Testis (tissue), 5 donors: ENCODE measurements at regions of chr1 and their contacts with region 1.

Region 1: DNA sequence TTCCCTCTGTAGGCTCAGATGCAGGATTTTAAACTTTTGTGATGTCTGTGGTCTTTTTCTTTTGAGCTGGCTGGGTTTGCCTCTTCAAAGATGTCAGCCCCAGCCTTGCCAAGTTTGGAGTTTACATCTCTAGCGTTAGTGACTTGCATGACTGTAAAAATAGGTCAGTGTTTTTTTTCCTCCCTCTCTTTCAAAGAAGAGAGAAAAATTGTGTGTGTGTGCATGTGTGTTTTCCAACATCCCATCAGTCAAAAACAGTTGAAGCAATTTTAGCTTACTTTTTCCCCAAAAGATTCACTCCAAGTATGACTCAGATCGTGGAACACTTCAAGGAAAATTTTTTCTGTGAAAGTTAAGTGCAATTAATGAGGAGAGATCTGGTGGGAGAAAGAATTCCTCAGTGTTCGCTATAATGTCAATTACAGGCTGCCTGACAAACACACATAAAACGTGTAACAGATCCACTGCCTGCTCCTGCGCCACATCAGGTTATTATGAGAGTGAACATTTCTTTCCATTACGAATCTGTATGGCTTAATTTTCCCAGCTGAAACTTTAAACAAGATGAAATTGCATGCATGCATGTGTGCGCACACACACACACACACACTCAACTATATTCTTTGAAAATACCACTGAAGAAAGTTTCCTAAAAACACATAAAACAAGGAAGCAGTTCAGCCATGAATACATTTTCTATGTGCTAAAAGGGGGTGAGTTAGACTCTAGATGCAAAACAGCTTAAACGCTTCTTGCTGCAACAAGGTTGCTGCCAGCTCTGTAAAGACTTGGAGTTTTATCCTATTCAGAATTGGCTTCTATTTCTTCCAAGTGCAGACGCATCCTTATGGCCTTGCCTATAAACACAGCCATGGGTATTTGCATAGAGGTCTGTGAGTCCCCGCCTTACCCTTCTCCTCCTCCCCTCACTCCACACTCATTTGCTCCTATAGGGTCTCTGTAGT is 55.5 kb downstream of the TLR5 start:
- DNase-seq: peak; percentile 43
- H3K4me3 ChIP-seq: no peak overlapping the region
- H3K27ac ChIP-seq: peak overlapping the region in 1 of 2 donors; percentile 41
- H3K4me1 ChIP-seq: peaks cover 15% of the 10 kb centered on the region
- H3K27me3 ChIP-seq: no peaks in the 10 kb centered on the region
- CTCF ChIP-seq: no peak
- POLR2A ChIP-seq: no peak

Region 2: GRCh38 chr1:222792744-222793143 is 294.8 kb before region 1 on chr1:
- intact Hi-C with region 1: loop called (anchors 5 kb)
- DNase-seq: no peak
- H3K4me3 ChIP-seq: no peak overlapping the region
- H3K27ac ChIP-seq: no peak overlapping the region
- H3K4me1 ChIP-seq: no peaks in the 10 kb centered on the region
- H3K27me3 ChIP-seq: no peaks in the 10 kb centered on the region
- CTCF ChIP-seq: peak; percentile 41 to 66 (median 59)
- POLR2A ChIP-seq: no peak

Region 3: DNA sequence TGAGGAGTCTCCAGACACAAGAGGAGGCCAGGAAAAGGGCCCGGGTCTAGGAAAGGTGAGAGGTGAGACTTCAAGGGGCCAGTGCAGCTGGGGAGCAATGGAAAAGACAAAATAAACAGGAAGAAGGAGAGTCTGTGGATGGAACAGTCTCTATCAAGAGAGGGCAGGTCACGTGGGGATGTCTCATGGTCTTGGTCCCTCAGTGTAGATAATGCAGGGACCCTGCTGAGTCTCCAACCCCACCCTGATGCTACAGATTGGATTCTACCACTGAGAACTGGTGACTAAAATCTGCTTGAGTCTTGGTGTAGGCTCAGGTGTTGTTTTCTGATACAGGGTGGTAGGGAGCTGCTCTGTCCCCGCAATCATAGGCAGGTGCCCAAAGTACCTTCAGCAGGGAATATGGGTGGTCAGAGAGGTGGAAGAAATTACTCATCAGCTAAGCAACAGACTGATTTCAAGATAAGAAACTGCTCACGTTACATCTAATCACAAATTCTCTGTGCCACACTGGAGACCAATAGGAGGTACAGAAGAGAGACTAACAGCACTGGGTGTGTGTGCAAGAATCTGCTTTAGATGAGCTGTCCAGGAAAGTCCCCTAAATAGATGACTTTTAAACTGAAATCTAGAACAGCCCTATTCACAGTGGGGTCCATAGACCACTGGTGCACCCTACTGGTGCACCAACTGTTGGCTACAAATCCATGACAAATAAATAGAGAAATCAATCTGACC is 157.0 kb after region 1 on chr1:
- intact Hi-C with region 1: no loop called
- DNase-seq: no peak
- H3K4me3 ChIP-seq: no peak overlapping the region
- H3K27ac ChIP-seq: no peak overlapping the region
- H3K4me1 ChIP-seq: no peaks in the 10 kb centered on the region
- H3K27me3 ChIP-seq: no peaks in the 10 kb centered on the region
- CTCF ChIP-seq: peak in 1 of 3 experiments; percentile 6
- POLR2A ChIP-seq: no peak